Ascending aorta (tissue), 2 donors: ENCODE measurements at regions of chr1 and their contacts with region 1.

Region 1: DNA sequence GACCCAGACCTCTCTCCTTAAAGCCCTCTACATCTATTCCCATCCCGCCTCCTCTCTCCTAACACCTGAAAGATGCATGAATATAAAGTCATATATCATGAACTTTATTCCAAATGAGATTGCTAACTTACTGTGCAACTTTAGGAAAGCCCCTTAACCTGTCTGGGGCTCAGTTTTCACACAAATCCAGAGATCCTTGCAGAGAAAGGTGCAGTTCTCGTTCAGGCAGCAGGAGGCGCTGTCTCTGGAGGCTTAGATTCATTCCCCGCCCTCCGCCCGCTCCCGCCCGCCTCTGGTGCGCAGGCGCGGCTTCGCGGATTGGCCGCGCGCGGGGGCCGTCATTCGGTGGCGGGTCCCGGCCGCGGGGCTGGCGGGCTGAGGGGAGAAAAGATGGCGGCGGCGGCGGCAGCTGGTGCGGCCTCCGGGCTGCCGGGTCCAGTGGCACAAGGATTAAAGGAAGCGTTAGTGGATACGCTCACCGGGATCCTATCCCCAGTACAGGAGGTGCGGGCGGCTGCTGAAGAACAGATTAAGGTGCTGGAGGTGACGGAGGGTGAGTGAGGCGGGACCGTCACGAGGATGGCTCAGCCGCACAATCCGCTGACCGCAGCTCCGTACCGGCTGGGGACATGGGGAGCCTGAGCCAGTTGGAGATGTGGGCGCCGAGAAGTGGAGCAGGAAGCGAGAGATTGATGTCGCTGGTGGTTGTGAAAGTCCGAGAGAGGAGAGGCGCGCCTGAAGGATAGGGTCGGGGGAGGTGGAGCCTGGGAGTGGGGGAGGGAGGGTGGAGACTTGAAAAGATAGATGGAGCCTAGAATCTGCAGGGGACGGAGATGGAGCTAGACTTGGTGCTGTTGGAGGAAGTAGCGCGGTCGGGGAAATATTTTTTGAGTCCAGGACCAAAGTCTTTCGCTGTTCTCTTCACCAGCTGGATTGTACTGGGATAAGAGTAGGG is at the start of gene IPO9:
- DNase-seq: peak; percentile 67 to 97
- H3K4me3 ChIP-seq: peak within 1 kb of the TSS; percentile 64 to 84
- H3K27ac ChIP-seq: peak within 1 kb of the TSS; percentile 92 to 94
- H3K4me1 ChIP-seq: peaks cover 3 to 30% of the 10 kb centered on the region in 2 donors
- H3K27me3 ChIP-seq: no peaks in the 10 kb centered on the region
- CTCF ChIP-seq: peak; percentile 91 to 97 (median 96)
- total RNA-seq, gene IPO9: 9.3 TPM

Region 2: DNA sequence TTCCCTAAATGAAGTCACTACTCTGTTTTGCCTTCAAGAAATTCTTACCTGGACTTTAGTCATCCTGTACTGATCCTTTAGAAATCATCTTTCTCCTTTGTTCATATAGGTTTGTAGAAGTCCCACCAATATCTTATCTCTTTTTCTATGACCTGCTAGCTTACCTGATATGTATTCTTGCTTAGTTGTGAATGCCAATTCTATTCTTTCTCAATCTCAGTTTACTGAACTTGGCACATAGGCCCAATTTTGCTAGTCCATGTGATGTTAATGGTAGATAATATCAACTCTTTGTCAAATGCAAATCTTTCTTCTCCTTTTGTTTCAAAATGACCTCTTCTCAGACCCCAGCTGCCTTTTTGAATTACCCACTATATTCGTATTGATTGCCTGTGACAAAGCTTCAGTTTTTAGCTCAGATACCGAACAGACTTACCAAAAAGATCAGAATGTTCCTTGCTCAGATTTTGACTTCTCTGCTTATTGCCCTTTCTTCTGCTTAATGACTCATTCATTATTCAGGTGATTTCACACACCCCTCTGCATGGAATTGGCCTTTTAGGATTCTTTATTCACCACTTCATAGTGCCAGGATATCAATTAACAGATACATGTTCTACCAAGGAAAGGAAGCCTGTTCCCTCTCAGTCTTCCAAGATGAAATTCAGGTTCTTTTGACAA is 20.4 kb after region 1 on chr1:
- intact Hi-C with region 1: loop called (anchors 1 kb)
- DNase-seq: no peak
- H3K4me3 ChIP-seq: no peak overlapping the region
- H3K27ac ChIP-seq: peak overlapping the region; percentile 65 to 83
- H3K4me1 ChIP-seq: peaks cover 4 to 32% of the 10 kb centered on the region in 2 donors
- H3K27me3 ChIP-seq: no peaks in the 10 kb centered on the region
- CTCF ChIP-seq: no peak

Region 3: DNA sequence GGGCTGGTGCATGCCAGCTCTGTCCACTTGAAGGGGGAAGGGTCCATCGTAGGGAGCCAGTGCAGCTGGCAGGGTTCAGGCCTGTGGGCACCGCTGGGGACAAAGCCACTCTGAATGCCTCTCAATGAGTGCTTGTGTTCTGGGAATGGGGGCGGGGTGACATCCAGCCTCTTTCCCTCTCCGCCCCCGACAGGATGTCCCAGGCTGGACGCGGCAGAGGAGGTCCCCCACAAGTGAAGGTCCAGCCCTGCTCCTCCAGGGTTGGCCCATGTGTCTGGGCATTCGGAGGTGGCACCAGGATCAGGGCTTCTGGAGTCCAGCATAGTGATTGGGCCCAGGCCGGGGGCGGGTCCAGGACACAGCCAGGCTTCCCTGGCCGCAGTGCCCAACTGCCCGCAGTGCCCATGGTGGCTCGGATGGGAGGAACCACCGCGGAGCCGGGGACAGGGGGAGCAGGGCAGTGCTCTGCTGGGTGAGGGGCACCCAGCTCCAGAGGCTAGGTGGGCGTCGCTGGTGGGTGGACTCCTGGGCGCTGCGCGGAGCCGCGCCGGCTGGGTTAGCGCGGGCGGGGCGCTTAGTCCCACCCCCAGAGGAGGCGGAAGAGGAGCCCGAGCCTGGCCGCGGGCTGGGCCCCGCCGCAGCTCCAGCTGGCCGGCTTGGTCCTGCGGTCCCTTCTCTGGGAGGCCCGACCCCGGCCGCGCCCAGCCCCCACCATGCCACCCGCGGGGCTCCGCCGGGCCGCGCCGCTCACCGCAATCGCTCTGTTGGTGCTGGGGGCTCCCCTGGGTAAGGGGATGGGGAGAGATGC is 59.4 kb after region 1 on chr1 and contains the start of gene SHISA4:
- intact Hi-C with region 1: loop called (anchors 2 kb)
- DNase-seq: peak; percentile 77 to 96
- H3K4me3 ChIP-seq: peak within 1 kb of the TSS; percentile 58 to 81
- H3K27ac ChIP-seq: peak within 1 kb of the TSS; percentile 87 to 94
- H3K4me1 ChIP-seq: peaks cover 30 to 52% of the 10 kb centered on the region in 2 donors
- H3K27me3 ChIP-seq: no peaks in the 10 kb centered on the region
- CTCF ChIP-seq: no peak
- total RNA-seq, gene SHISA4: 62.5 TPM